HEK293T (cell line): ENCODE measurements at regions of chr17 and their contacts with region 1.

Region 1: DNA sequence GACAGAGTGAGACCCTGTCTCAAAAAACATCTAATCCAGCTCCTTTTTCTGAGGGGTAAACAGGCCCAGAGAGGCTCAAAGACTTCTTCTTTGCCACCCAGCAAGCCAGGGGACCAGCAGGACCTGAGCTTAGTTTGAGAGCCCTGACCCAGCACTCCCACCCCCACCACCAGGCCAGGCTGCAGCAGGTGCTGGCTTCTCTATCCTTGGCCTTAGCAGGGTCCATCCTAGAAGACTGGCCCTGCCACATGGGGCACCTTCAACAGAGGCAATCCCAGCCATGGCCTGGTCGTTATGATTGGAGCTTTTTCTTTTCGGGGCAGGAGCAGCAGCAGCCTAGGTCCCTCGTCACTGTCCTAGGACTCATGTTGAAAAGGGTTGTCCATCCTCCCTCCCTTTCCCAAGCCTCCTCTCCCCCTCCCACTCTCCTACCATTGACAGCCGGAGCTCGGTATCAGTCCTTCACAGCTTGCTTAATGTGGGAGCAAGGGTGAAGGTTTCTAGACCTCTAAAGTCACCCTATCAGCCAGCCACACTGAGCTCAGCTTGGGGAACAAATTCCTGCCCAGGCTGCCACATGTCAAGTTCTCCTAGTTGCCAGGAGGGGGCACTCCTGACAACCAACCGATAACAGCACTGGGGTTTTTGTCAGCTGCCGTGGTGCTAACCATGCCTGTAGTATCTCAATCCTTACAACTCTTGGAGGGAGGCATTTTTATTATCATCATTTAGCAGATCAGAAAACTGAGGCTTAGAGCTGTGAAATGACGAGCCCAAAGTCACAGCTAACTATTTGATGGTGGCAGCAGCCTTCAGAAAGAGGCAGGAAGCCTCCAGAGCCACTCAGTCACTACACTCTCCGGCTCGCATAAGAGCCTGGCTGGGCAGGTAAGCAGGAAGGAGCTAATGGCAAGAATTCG is 11.2 kb downstream of the MRPL27 start:
- DNase-seq: peak; percentile 83

Region 2: GRCh38 chr17:50345432-50346312 is 16.1 kb before region 1 on chr17 and contains the start of gene XYLT2:
- CTCF ChIA-PET with region 1: interaction called, 9 read pairs
- POLR2A ChIA-PET with region 1: interaction called, 12 read pairs
- DNase-seq: peak; percentile 98

Region 3: GRCh38 chr17:50372758-50373556 is 11.1 kb after region 1 on chr17 and contains the starts of genes EME1 and MRPL27:
- CTCF ChIA-PET with region 1: interaction called, 9 read pairs
- POLR2A ChIA-PET with region 1: interaction called, 15 read pairs
- DNase-seq: peak; percentile 92

Region 4: GRCh38 chr17:50478391-50479381 is 116.9 kb after region 1 on chr17 and contains the start of gene RSAD1:
- CTCF ChIA-PET with region 1: interaction called, 13 read pairs
- POLR2A ChIA-PET with region 1: interaction called, 14 read pairs
- DNase-seq: peak; percentile 85